ENCODE measurements at regions of chr17 and their contacts with region 1.

Region 1: GRCh38 chr17:17496189-17497064 is at the start of gene RASD1:
- DNase-seq: peak; percentile 68
- H3K4me3 Mint-ChIP-seq: peak within 1 kb of the TSS; percentile 65
- H3K27ac Mint-ChIP-seq: no peak within 1 kb of the TSS
- H3K4me1 Mint-ChIP-seq: peaks cover 10% of the 10 kb centered on the region
- H3K27me3 Mint-ChIP-seq: peaks cover 20% of the 10 kb centered on the region
- total RNA-seq, gene RASD1: 0.29 to 0.42 TPM

Region 2: DNA sequence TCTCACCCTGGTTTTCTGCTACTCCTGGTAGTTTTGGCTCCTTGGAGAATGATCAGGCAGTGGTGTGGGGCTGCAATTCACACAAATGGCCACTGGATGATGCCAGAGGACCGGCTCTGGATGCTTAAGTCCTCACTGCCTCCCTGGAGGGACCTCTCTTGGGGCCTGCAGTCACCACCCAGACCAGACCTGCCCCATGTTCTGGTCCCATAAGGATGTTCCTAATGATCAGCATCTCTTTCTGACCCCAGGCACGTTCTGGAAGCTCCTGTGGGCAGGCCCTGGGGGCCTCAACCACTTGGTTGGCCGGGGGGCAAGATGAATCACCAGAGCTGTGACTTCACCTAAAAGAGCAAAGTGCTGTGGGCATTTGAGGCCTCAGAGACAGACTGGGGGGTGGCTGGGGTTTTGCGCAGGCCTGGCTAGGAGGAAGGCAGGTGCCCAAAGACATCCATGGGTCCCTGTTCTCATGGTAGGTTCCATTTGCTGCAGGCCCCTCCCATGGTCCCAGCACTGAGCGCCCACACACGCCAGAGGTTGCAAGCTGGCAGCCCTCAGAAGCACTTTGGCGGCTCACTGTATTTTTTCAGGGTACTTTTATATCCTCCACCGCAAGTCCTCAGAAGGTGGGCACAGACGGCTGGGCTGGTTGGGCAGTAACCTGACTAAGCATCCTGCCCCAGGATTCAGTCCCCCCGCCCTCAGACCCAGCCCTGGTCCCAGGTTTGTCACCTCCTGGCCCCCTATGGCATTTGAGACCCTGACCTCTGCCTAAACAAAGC is 140.1 kb before region 1 on chr17:
- CTCF ChIA-PET with region 1: interaction called, 16 read pairs
- POLR2A ChIA-PET with region 1: no interaction called
- DNase-seq: peak; percentile 72
- H3K4me3 Mint-ChIP-seq: no peak overlapping the region
- H3K27ac Mint-ChIP-seq: peak overlapping the region; percentile 26
- H3K4me1 Mint-ChIP-seq: no peaks in the 10 kb centered on the region
- H3K27me3 Mint-ChIP-seq: peaks cover 14% of the 10 kb centered on the region

Region 3: GRCh38 chr17:17467720-17468119 is 28.7 kb before region 1 on chr17:
- CTCF ChIA-PET with region 1: interaction called, 13 read pairs
- POLR2A ChIA-PET with region 1: no interaction called
- DNase-seq: no peak
- H3K4me3 Mint-ChIP-seq: no peak overlapping the region
- H3K27ac Mint-ChIP-seq: no peak overlapping the region
- H3K4me1 Mint-ChIP-seq: no peaks in the 10 kb centered on the region
- H3K27me3 Mint-ChIP-seq: peaks cover 18% of the 10 kb centered on the region

Region 4: DNA sequence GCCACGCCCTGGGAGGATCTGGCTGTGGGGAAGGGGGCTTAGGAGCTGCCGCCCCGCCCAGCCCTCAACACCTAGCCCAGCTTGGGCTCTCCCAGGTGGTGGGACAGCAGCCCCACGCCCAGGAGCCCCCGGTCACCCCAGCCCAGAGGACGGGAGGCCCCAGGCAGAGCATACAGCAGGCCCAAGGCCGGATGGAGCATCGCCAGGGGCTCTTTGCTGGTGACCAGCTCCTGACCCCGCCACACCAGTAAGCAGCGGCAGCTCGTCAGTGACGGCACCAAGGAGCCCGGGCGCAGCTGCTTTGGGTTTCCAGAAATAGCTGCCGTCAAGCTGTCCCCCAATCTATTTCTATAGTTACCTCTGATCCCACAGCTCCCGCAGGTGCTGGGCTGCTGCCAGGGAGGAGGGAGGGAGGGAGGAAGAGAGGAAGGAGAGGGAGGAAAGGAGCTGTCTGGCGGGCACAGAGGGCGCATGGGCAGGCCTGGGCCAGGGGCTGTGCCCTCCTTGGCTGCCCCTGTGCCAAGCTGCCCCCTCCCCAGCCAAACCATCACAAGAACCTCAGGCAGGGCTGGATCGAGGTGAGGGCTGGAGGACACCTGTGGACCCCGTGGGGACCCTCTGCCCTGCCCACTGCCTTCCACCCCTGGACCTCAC is 10.5 kb after region 1 on chr17:
- CTCF ChIA-PET with region 1: interaction called, 35 read pairs
- POLR2A ChIA-PET with region 1: no interaction called
- DNase-seq: no peak
- H3K4me3 Mint-ChIP-seq: no peak overlapping the region
- H3K27ac Mint-ChIP-seq: no peak overlapping the region
- H3K4me1 Mint-ChIP-seq: peaks cover 2% of the 10 kb centered on the region
- H3K27me3 Mint-ChIP-seq: no peaks in the 10 kb centered on the region

Region 5: DNA sequence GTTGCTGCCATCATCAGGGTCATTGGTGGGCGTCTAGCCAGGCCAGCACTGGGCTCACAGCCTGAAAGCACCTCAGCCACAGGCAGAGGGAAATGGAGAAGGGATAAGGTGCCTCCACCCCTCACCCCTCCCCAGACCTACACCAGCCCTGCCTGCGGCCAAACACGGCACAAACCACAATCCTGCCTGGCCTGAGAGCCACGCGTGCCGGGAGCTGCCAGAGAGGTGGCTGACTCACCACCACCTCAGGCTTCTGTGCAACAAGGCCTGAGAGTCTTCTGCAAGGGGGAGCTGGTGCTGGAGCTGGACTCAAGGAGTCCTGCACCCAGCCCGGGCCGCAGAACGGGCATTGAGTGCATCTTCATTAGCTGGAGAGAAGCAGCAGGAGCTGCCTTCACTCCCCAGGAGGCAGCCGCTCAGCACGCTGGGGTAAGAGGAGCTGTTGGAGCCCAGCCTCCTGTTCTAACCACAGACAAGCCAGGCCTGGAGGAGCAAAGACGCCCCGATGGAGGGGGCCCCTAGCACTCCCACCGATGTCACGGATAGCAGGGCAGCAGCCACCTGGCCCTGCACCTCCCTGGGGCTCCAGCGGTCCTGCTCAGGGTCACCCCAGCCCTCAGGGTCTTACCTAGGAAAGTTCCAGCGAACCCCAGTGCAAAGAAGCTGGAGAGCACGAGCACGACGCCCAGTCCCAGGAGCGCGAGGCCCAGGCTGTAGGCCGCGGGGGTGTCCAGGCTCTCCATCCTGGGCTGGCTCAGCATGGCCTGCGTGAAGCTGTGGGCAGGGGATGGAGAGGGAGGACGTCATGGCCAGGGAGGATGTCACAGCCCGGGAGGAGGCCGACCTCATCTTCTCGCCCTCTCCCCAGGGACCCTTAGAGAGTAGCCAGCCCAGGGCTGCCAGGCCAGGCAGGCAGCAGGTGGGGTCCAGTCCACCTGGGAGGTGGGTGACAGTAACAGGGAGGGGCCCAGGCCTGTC is 15.7 kb after region 1 on chr17:
- CTCF ChIA-PET with region 1: interaction called, 35 read pairs
- POLR2A ChIA-PET with region 1: no interaction called
- DNase-seq: no peak
- H3K4me3 Mint-ChIP-seq: no peak overlapping the region
- H3K27ac Mint-ChIP-seq: no peak overlapping the region
- H3K4me1 Mint-ChIP-seq: peaks cover 2% of the 10 kb centered on the region
- H3K27me3 Mint-ChIP-seq: no peaks in the 10 kb centered on the region

Region 6: DNA sequence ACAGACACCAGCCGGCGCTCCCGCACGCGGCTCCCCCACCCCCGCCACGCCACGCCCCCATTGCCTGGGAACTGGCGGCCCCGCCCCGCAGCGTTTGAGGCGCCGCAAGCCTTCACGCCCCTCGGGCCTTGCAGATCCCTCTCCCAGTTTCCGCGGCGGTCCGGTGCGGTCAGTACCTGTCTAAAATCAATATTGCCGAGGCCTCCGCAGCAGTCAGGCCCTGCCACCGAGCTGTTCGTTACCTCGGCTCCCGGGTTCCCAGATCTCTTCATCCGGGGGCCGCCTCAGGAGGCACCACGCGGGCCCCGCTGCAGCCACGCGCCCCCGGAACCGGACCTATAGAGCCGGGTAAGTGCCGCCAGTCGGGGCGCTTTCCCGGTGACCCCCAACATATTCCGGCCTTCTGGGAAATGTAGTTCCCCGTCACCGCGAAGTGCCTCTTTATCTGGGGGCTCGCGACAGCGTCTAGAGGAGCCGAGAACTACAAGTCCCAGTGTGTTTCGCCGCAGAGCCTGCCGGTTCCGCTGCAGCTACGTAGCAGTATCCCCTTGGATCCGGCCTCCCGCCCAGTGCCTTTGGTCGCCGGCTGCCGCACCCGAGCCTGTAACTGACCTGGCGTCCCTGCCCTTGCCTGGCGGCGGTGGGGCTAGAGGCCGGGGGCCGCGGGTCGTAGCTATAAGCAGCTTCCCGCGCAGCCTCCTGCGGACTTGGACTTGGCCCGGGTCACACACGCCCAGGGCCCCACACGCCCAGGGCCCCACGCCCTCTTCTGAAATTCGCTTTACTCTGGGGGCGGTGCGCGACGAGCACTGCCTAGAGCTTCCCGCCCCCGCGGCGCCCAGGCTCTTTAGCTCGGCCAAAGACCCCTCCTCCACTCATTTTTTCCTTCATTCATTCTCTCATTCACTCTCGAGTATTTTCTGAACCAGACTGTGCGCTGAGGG is 95.2 kb after region 1 on chr17 and contains the start of gene PEMT:
- CTCF ChIA-PET with region 1: interaction called, 15 read pairs
- POLR2A ChIA-PET with region 1: no interaction called
- DNase-seq: peak; percentile 97
- H3K4me3 Mint-ChIP-seq: peak within 1 kb of the TSS; percentile 83
- H3K27ac Mint-ChIP-seq: peak within 1 kb of the TSS; percentile 92
- H3K4me1 Mint-ChIP-seq: peaks cover 24% of the 10 kb centered on the region
- H3K27me3 Mint-ChIP-seq: no peaks in the 10 kb centered on the region
- total RNA-seq, gene PEMT: 10.8 to 17.3 TPM

Region 7: GRCh38 chr17:17641621-17642409 is 145.4 kb after region 1 on chr17:
- CTCF ChIA-PET with region 1: interaction called, 10 read pairs
- POLR2A ChIA-PET with region 1: no interaction called
- DNase-seq: peak; percentile 87
- H3K4me3 Mint-ChIP-seq: no peak overlapping the region
- H3K27ac Mint-ChIP-seq: no peak overlapping the region
- H3K4me1 Mint-ChIP-seq: no peaks in the 10 kb centered on the region
- H3K27me3 Mint-ChIP-seq: no peaks in the 10 kb centered on the region

Measured in activated CD4-positive, alpha-beta T cell treated with anti-CD3 and anti-CD28 coated beads, Interleukin-2, amount 10 ng/mL, durations not matched to agents 7 days and 5 days (primary cell).